Activated CD4-positive, alpha-beta T cell treated with anti-CD3 and anti-CD28 coated beads for 36 hours (primary cell): ENCODE measurements at regions of chr2 and their contacts with region 1.

Region 1: GRCh38 chr2:25700221-25700660 is 26.9 kb upstream of the DTNB start:
- DNase-seq: peak; percentile 47
- ATAC-seq: peak; percentile 53
- H3K4me3 Mint-ChIP-seq: no peak overlapping the region
- H3K27ac Mint-ChIP-seq: no peak overlapping the region
- H3K4me1 Mint-ChIP-seq: peaks cover 2% of the 10 kb centered on the region
- H3K27me3 Mint-ChIP-seq: no peaks in the 10 kb centered on the region

Region 2: GRCh38 chr2:24382363-24383073 is 1317.7 kb before region 1 on chr2:
- CTCF ChIA-PET with region 1: no interaction called
- POLR2A ChIA-PET with region 1: no interaction called
- intact Hi-C with region 1: no loop called
- DNase-seq: peak; percentile 74
- ATAC-seq: peak; percentile 97
- H3K4me3 Mint-ChIP-seq: no peak overlapping the region
- H3K27ac Mint-ChIP-seq: no peak overlapping the region
- H3K4me1 Mint-ChIP-seq: no peaks in the 10 kb centered on the region
- H3K27me3 Mint-ChIP-seq: no peaks in the 10 kb centered on the region

Region 3: DNA sequence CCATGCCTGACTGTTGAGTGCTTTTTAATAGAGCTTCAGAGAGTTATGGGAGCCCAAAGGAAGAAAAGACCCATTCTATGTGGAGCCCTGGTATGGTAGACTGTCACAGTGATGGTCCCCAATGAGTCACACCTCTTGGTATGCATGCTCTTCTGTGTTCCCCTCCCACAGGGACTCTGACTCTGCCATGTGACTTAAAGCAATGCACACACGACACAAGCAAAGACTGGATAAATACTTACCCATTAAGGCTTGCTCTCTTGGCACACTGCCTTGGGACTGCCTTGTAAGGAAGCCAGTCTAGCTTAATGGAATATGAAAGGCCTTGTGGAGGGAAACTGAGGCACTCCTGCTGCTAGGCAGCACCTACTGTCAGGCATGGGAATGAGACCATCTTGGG is 10.2 kb before region 1 on chr2:
- CTCF ChIA-PET with region 1: interaction called, 14 read pairs
- POLR2A ChIA-PET with region 1: no interaction called
- intact Hi-C with region 1: no loop called
- DNase-seq: no peak
- ATAC-seq: peak; percentile 61
- H3K4me3 Mint-ChIP-seq: no peak overlapping the region
- H3K27ac Mint-ChIP-seq: no peak overlapping the region
- H3K4me1 Mint-ChIP-seq: no peaks in the 10 kb centered on the region
- H3K27me3 Mint-ChIP-seq: peaks cover 2% of the 10 kb centered on the region

Region 4: GRCh38 chr2:25710750-25711149 is 10.5 kb after region 1 on chr2:
- CTCF ChIA-PET with region 1: interaction called, 20 read pairs
- POLR2A ChIA-PET with region 1: interaction called, 7 read pairs
- intact Hi-C with region 1: no loop called
- DNase-seq: no peak
- ATAC-seq: peak; percentile 39
- H3K4me3 Mint-ChIP-seq: no peak overlapping the region
- H3K27ac Mint-ChIP-seq: no peak overlapping the region
- H3K4me1 Mint-ChIP-seq: peaks cover 8% of the 10 kb centered on the region
- H3K27me3 Mint-ChIP-seq: peaks cover 4% of the 10 kb centered on the region